MCF 10A (cell line): ENCODE measurements at regions of chr12 and their contacts with region 1.

Region 1: GRCh38 chr12:99810718-99811593 is 163.4 kb downstream of the GARIN6 start:
- DNase-seq: peak; percentile 78
- H3K4me3 Mint-ChIP-seq: no peak overlapping the region
- H3K27ac Mint-ChIP-seq: no peak overlapping the region
- H3K4me1 Mint-ChIP-seq: peaks cover 6% of the 10 kb centered on the region
- H3K27me3 Mint-ChIP-seq: no peaks in the 10 kb centered on the region
- CTCF ChIP-seq: peak; percentile 41

Region 2: GRCh38 chr12:99759444-99759843 is 51.5 kb before region 1 on chr12:
- CTCF ChIA-PET with region 1: no interaction called
- POLR2A ChIA-PET with region 1: no interaction called
- intact Hi-C with region 1: no loop called
- DNase-seq: no peak
- H3K4me3 Mint-ChIP-seq: no peak overlapping the region
- H3K27ac Mint-ChIP-seq: no peak overlapping the region
- H3K4me1 Mint-ChIP-seq: peaks cover 5% of the 10 kb centered on the region
- H3K27me3 Mint-ChIP-seq: no peaks in the 10 kb centered on the region
- CTCF ChIP-seq: no peak

Region 3: GRCh38 chr12:99911081-99911480 is 100.1 kb after region 1 on chr12:
- CTCF ChIA-PET with region 1: no interaction called
- POLR2A ChIA-PET with region 1: interaction called, 4 read pairs
- intact Hi-C with region 1: loop called (anchors 2 kb)
- DNase-seq: peak; percentile 91
- H3K4me3 Mint-ChIP-seq: peak overlapping the region; percentile 47
- H3K27ac Mint-ChIP-seq: peak overlapping the region; percentile 83
- H3K4me1 Mint-ChIP-seq: peaks cover 59% of the 10 kb centered on the region
- H3K27me3 Mint-ChIP-seq: no peaks in the 10 kb centered on the region
- CTCF ChIP-seq: no peak

Region 4: DNA sequence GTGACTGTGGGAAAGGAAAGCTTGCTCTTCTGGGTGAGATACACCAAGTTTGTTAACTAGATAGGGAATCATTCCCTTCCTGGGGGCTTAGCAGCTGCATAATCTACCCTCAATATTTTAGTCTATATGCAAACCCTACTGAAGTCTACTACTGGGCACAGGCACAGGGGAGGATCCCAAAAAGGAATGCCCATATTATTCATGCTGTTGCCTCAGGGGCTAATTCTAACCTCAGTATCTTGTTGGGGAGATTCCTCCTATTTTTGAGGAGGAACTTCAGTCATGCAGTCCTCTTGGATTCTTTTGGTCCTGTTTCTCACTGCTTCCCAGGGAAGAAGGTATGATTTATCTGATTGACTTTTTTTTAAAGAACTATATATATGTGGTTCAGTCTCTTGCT is 232.7 kb after region 1 on chr12:
- CTCF ChIA-PET with region 1: interaction called, 5 read pairs
- POLR2A ChIA-PET with region 1: no interaction called
- intact Hi-C with region 1: loop called (anchors 5 kb)
- DNase-seq: peak; percentile 16
- H3K4me3 Mint-ChIP-seq: no peak overlapping the region
- H3K27ac Mint-ChIP-seq: no peak overlapping the region
- H3K4me1 Mint-ChIP-seq: peaks cover 12% of the 10 kb centered on the region
- H3K27me3 Mint-ChIP-seq: no peaks in the 10 kb centered on the region
- CTCF ChIP-seq: no peak

Region 5: DNA sequence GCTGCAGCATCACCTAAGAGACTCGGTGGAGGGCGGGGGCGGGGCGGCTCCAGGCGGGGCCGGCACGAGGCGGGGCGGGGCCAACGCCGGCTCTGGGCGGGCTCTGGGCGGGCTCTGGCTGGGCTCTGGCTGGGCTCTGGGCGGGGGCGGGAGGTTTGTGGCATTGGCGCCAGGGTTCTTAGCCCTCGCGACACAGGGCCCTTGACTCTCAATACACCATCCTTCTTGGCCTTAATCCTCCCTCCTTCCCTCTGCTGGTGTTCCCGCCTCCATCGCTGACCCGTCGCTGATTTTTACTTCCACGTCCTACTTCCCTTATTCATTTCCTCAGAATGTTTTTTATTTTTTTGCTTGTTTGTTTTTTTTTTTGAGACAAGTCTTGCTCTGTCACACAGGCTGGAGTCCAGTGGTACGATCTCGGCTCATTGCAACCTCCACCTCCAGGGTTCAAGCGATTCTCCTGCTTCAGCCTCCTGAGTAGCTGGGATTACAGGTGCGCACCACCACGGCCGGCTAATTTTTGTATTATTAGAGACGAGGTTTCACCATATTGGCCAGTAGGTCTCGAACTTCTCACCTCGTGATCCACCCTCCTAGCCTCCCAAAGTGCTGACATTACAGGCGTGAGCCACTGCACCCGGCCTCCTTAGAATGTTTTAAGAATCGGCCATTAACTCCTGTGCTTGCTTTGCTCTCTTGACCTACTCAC is 332.0 kb after region 1 on chr12 and contains the start of gene BLTP3B:
- CTCF ChIA-PET with region 1: no interaction called
- POLR2A ChIA-PET with region 1: no interaction called
- intact Hi-C with region 1: loop called (anchors 5 kb)
- DNase-seq: peak; percentile 82
- H3K4me3 Mint-ChIP-seq: peak within 1 kb of the TSS; percentile 89
- H3K27ac Mint-ChIP-seq: peak within 1 kb of the TSS; percentile 94
- H3K4me1 Mint-ChIP-seq: peaks cover 24% of the 10 kb centered on the region
- H3K27me3 Mint-ChIP-seq: no peaks in the 10 kb centered on the region
- CTCF ChIP-seq: no peak
- total RNA-seq, gene BLTP3B: 17.7 and 20.1 TPM in 2 replicates

Region 6: DNA sequence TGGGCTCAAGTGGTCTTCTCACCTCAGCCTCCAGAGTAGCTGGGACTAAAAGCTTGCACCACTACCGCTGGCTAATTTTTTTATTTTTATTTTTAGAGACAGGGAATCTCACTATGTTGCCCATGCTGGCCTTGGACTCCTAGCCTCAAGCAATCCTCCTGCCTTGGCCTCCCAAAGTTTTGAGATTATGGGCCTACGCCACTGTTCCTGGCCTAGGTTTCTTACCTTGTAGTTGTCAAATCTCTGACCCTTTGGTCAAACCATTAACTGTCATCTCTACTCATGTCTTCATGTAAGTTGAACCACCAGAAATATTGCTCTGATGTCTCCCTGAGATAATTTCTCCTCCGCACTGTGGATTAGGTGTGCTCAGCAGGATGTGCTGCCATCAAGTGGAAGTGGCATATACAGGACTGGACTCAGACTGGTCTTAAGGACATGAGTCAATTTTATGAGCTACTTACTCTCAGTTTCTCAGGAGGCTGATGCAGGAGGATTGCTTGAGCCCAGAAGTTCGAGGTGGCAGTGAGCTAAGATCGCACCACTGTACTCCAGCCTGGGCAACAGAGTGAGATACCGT is 418.2 kb after region 1 on chr12:
- CTCF ChIA-PET with region 1: interaction called, 5 read pairs
- POLR2A ChIA-PET with region 1: no interaction called
- intact Hi-C with region 1: loop called (anchors 2 kb)
- DNase-seq: peak; percentile 53
- H3K4me3 Mint-ChIP-seq: peak overlapping the region; percentile 10
- H3K27ac Mint-ChIP-seq: no peak overlapping the region
- H3K4me1 Mint-ChIP-seq: peaks cover 7% of the 10 kb centered on the region
- H3K27me3 Mint-ChIP-seq: no peaks in the 10 kb centered on the region
- CTCF ChIP-seq: peak; percentile 15

Region 7: DNA sequence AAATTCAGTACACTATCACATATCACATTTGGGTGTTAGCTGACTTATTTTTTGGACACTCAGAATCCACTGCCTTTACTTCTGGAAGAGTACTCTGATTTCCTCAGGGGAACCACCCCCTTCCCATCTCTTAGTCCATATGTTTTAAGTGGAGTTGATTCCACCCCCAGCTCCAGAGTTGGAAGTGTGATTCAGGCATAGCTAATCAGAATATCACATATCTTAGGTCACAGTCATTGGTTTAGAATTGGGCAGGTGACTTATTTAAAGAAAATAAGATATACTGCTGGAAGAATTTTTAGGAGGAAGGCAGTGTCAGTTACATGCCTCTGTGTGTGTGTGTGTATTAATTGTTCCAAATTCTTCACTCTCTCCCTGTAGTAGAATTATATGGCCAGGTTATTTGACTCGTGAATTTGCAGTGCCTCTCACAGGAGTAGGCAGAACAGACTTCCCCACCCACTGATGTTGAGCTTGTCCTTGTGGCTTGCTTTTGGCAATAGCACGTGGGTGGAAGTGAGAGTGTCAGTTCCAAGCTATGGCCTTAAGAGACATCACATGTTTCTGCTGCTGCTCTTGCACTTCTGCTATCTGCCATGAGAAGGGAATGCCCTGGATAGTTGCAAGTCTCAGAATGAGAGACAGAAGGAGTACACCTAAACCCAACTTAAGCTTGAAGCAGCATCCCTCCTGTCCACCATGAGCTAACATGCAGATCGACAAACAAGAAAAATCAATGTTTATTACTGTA is 756.1 kb after region 1 on chr12:
- CTCF ChIA-PET with region 1: no interaction called
- POLR2A ChIA-PET with region 1: no interaction called
- intact Hi-C with region 1: no loop called
- DNase-seq: no peak
- H3K4me3 Mint-ChIP-seq: no peak overlapping the region
- H3K27ac Mint-ChIP-seq: no peak overlapping the region
- H3K4me1 Mint-ChIP-seq: peaks cover 8% of the 10 kb centered on the region
- H3K27me3 Mint-ChIP-seq: peaks cover 24% of the 10 kb centered on the region
- CTCF ChIP-seq: no peak